ENCODE measurements at regions of chr15 and their contacts with region 1.

Region 1: GRCh38 chr15:99928429-99928981 is 195.3 kb upstream of the LYSMD4 start:
- DNase-seq: peak; percentile 78 to 90
- H3K4me3 ChIP-seq: peak overlapping the region; percentile 48 to 62
- H3K27ac ChIP-seq: peak overlapping the region; percentile 83 to 84
- H3K4me1 ChIP-seq: peaks cover 0 to 11% (median 8%) of the 10 kb centered on the region in 4 donors
- H3K27me3 ChIP-seq: no peaks in the 10 kb centered on the region
- CTCF ChIP-seq: peak; percentile 67

Region 2: DNA sequence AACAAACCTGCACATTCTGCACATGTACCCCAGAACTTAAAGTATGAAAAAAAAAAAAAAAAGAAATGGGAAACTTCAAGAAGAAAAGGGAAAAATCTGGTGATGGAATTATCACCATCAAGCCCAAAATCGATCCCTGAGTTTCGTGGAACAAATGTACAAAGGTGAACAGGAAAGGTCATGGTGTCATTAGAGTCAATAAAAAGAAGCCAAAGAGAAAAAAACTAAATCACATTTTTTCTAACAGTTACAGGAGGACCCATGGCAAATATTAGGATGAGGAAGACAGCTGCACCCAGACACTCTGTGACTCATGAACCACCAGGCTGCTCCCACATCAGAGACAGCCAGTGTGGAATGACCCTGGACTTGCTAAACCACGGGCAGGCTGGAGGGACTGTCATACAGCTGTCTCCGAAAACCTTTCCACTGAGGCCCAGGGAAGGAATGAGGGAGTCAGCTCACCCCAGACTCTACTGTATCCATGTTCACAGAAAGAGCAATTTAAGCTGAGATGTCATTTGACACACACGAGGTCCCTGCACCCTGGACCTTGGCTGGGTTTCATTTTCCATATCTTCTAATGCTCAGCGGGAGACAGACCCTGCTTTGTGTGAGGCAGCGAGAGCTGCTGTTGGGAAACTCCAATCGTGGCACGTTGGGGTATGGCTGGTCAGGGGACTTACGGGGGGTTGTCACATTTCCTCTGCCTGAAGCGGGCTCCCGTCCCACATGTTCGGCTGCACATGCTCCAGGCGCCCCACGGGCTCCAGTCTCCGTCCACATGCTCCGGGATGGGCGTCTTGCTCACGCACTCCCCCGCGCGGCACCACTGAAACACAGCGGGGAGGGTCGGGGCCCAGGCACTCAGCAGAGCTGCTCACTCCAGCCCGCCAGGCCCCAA is 203.1 kb after region 1 on chr15:
- intact Hi-C with region 1: loop called (anchors 5 kb)
- DNase-seq: no peak
- H3K4me3 ChIP-seq: peak overlapping the region; percentile 20 to 35
- H3K27ac ChIP-seq: no peak overlapping the region
- H3K4me1 ChIP-seq: no peaks in the 10 kb centered on the region
- H3K27me3 ChIP-seq: no peaks in the 10 kb centered on the region
- CTCF ChIP-seq: peak; percentile 29 to 37

Region 3: DNA sequence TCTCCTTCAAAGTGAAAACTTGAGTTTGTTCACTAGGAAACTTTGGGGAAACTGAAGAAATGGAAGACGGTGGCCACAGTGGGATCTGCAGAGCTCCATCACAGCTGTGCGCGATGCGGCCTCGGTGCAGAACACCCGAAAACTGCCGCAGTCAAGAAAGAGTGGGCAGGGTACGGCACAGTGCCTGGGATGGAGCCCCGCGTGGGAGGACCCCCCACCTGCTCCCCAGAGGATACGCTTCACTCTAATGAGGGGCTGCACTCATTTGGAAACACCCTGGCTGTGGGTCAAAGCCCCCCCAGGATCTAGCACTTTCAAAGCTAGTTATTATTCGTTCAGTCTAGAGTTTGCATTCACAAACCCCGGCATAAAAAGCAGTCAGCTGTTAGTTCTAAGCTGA is 403.7 kb after region 1 on chr15:
- intact Hi-C with region 1: loop called (anchors 2 kb)
- DNase-seq: no peak
- H3K4me3 ChIP-seq: no peak overlapping the region
- H3K27ac ChIP-seq: no peak overlapping the region
- H3K4me1 ChIP-seq: no peaks in the 10 kb centered on the region
- H3K27me3 ChIP-seq: no peaks in the 10 kb centered on the region
- CTCF ChIP-seq: no peak

Region 4: GRCh38 chr15:100341662-100342560 is 413.4 kb after region 1 on chr15 and contains the start of gene ADAMTS17:
- intact Hi-C with region 1: loop called (anchors 2 kb)
- DNase-seq: peak; percentile 97
- H3K4me3 ChIP-seq: peak within 1 kb of the TSS; percentile 66 to 75
- H3K27ac ChIP-seq: peak within 1 kb of the TSS; percentile 51 to 74
- H3K4me1 ChIP-seq: peaks cover 0 to 14% (median 10%) of the 10 kb centered on the region in 4 donors
- H3K27me3 ChIP-seq: no peaks in the 10 kb centered on the region
- CTCF ChIP-seq: peak; percentile 94 to 98

Region 5: DNA sequence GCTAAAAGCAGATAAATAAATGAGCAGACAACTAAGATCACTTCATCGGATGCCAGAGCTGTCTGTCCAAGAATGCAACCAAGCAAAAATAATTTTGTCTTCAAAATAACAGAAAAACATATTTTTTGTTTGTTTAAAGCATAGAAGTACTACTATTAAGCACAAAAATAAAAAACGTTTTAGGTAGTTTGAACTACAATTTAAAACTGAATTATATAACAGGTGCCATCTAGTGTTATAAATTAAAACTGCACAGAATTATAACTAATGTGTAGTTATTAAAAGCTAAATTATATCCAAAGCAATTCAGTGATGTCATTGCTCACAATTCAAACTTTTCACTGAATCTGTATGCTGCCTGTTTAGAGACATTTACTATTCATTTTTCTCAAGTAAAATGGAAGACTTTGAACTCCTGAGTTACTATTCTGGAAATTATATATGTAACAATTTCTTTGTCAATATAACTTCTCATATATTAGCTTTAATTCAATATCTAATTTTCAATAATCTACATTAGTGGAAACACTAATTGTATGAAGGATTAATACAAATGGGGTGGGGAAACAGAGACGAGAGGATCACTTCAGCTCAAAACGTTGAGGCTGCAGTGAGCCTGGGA is 644.0 kb after region 1 on chr15:
- intact Hi-C with region 1: loop called (anchors 10 kb)
- DNase-seq: no peak
- H3K4me3 ChIP-seq: no peak overlapping the region
- H3K27ac ChIP-seq: no peak overlapping the region
- H3K4me1 ChIP-seq: no peaks in the 10 kb centered on the region
- H3K27me3 ChIP-seq: no peaks in the 10 kb centered on the region
- CTCF ChIP-seq: peak; percentile 44 to 58

Region 6: DNA sequence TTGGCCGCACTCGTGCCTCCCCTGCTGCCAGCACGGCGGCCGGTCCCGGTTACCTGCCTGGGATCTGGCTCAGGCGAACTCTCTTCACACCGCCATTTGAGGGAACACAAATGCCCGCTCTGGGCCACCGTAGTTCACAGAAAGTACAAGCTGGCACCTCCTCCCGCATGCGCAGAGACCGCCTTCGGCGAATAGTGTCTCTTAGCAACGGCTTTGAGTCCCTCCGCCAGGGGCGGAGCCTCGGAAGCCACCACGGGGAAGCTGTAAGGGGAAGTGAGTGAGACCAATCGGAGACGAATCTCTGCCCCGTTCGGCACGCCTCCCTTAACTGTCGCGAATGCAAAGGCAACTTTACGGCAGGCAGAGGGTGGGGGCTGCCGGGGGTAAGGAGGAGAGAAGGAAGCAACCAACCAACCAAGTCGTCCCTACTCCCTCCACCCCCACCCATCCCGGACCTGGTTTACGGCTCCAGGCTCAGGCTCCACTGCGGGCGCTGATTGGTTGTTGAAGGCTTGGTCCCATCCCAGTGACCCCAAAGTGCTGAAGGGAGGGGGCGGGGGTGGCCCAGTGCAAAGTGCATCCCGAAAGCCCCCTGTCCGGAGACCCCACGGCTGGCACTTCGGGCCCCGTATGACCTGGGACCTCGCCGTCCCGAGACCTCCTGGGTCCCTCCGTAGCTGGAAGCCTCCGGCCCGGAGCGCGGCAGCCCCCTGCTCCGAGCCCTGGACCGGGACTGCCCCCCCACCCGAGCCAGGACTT is 673.7 kb after region 1 on chr15 and contains the starts of genes ASB7 and LINS1:
- intact Hi-C with region 1: loop called (anchors 10 kb)
- DNase-seq: peak; percentile 100
- H3K4me3 ChIP-seq: peak within 1 kb of the TSS; percentile 71 to 77
- H3K27ac ChIP-seq: peak within 1 kb of the TSS; percentile 82 to 87
- H3K4me1 ChIP-seq: peaks cover 0 to 41% (median 28%) of the 10 kb centered on the region in 4 donors
- H3K27me3 ChIP-seq: no peaks in the 10 kb centered on the region
- CTCF ChIP-seq: no peak

Measured in tibial artery (tissue), 4 donors.